ENCODE measurements at regions of chr6 and their contacts with region 1.

Region 1: GRCh38 chr6:116444092-116444491 is 17.1 kb upstream of the CALHM6 start:
- DNase-seq: no peak
- ATAC-seq: no peak
- H3K4me3 ChIP-seq: no peak overlapping the region
- H3K27ac ChIP-seq: no peak overlapping the region
- H3K4me1 ChIP-seq: peaks cover 2 to 4% of the 10 kb centered on the region in 2 donors
- H3K27me3 ChIP-seq: no peaks in the 10 kb centered on the region

Region 2: GRCh38 chr6:116287689-116288282 is 156.3 kb before region 1 on chr6:
- intact Hi-C with region 1: loop called (anchors 5 to 10 kb)
- DNase-seq: no peak
- ATAC-seq: no peak
- H3K4me3 ChIP-seq: no peak overlapping the region
- H3K27ac ChIP-seq: no peak overlapping the region
- H3K4me1 ChIP-seq: no peaks in the 10 kb centered on the region
- H3K27me3 ChIP-seq: no peaks in the 10 kb centered on the region

Measured in aorta (tissue), 5 donors.